Endothelial cell of umbilical vein (primary cell): ENCODE measurements at regions of chr2 and their contacts with region 1.

Region 1: GRCh38 chr2:32356735-32357644 is at the start of gene BIRC6:
- DNase-seq: peak; percentile 97
- H3K4me3 ChIP-seq: peak within 1 kb of the TSS; percentile 68 to 92 (median 84)
- H3K27ac ChIP-seq: peak within 1 kb of the TSS; percentile 77
- H3K4me1 ChIP-seq: peaks cover 13% of the 10 kb centered on the region
- H3K27me3 ChIP-seq: no peaks in the 10 kb centered on the region
- CTCF ChIP-seq: no peak
- POLR2A ChIP-seq: peak; percentile 96
- total RNA-seq, gene BIRC6: 75.7 and 83.1 TPM in 2 replicates

Region 2: GRCh38 chr2:32210767-32211408 is 146.1 kb before region 1 on chr2:
- CTCF ChIA-PET with region 1: no interaction called
- POLR2A ChIA-PET with region 1: no interaction called
- dilution Hi-C with region 1: no loop called
- intact Hi-C with region 1: no loop called
- DNase-seq: no peak
- H3K4me3 ChIP-seq: no peak overlapping the region
- H3K27ac ChIP-seq: no peak overlapping the region
- H3K4me1 ChIP-seq: no peaks in the 10 kb centered on the region
- H3K27me3 ChIP-seq: no peaks in the 10 kb centered on the region
- CTCF ChIP-seq: no peak
- POLR2A ChIP-seq: no peak

Region 3: DNA sequence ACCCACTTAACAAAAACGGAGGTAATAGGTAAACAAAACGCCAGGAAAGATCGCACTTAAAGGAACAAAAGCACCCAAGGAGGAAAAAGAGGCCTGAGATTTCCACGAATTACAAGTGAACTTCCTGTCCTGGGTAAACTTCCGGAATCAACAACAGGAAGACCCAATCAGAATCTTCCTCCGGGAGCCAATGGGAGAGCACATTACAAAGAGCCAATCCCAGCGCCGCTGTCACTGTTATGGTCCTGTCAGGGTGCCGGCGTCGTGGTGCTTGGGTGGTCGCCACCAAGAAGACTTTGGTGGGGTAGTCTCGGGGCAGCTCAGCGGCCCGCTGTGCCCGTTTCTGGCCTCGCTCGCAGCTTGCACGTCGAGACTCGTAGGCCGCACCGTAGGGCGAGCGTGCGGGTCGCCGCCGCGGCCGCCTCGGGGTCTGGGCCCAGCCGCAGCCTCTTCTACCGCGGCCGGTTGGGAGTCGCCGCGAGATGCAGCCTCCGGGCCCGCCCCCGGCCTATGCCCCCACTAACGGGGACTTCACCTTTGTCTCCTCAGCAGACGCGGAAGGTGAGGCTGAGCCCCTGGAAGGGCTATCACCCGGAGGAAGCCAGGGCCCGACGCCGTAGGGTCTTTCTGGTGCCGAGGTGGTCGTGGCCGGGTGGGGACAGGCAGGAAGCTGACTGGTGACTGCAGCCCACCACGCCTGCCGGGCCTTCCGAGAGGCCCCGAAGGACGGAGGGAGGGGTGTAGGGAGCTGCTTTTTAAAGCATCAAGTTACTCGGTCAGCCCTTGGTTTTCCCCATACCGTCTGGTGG is 79.1 kb before region 1 on chr2 and contains the start of gene YIPF4:
- CTCF ChIA-PET with region 1: no interaction called
- POLR2A ChIA-PET with region 1: no interaction called
- dilution Hi-C with region 1: no loop called
- intact Hi-C with region 1: loop called (anchors 1 kb)
- DNase-seq: peak; percentile 97
- H3K4me3 ChIP-seq: peak within 1 kb of the TSS; percentile 86 to 94 (median 88)
- H3K27ac ChIP-seq: peak within 1 kb of the TSS; percentile 80
- H3K4me1 ChIP-seq: peaks cover 11% of the 10 kb centered on the region
- H3K27me3 ChIP-seq: peaks cover 0 to 2% of the 10 kb centered on the region in 2 experiments
- CTCF ChIP-seq: no peak
- POLR2A ChIP-seq: peak; percentile 69
- total RNA-seq, gene YIPF4: 40.1 and 45.0 TPM in 2 replicates

Region 4: DNA sequence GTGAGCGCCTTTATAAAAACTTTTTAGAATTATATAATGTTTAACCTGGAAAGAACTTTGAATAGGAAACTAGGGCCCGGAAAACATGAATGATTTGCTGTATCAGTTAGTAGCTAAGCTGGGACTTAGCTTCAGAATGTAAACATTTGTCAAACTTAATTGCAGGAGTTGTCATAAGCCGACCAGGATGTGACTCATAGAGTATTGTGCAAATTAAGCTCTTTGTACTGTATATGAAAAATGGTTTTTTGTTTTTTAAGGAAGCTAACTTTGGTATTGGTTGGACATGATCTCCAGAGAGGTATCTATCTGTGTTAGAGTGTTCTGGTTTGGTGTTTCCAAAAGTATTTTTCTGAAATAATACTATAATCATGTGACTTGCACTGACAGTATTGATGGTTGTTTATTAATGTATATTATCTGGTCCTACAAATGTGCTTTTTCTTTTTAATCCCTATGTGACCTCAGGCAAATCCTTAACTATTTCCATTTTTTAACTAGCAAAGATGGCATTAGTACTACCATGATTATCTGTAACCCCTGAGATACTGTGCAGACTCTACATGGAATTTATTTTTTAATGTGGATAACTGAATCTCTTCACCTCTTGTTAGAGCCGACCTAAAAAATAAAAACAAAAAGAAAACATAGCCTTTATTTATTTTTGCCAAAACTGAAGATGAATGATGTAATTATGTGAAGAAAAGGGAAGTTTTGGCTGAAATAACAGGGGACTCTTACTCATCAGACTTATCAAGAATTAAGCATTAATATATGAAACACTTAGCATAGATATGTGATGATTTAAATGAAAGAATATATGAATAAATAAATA is 67.6 kb before region 1 on chr2:
- CTCF ChIA-PET with region 1: no interaction called
- POLR2A ChIA-PET with region 1: no interaction called
- dilution Hi-C with region 1: no loop called
- intact Hi-C with region 1: no loop called
- DNase-seq: peak; percentile 86
- H3K4me3 ChIP-seq: no peak overlapping the region
- H3K27ac ChIP-seq: peak overlapping the region; percentile 70
- H3K4me1 ChIP-seq: peaks cover 28% of the 10 kb centered on the region
- H3K27me3 ChIP-seq: no peaks in the 10 kb centered on the region
- CTCF ChIP-seq: no peak
- POLR2A ChIP-seq: no peak

Region 5: DNA sequence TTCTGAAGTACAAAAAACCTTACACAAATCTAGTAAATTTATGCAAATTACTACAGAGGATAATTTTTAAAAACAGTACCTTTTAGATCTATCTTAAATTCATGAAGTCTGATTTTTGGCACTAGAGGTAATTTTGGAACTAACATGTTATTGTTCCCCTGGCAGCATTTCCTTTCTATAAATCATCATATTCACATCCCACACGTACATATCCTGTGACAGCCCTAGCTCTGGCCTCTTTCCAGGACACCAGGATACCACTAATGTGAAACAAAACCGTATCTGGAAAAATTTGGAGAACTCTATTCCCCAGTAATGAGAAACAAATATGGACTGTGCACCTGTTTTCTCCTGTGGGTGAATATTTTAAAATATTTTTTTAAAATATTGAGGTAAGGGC is 14.2 kb before region 1 on chr2:
- CTCF ChIA-PET with region 1: interaction called, 3 read pairs
- POLR2A ChIA-PET with region 1: no interaction called
- dilution Hi-C with region 1: no loop called
- intact Hi-C with region 1: loop called (anchors 1 kb)
- DNase-seq: peak; percentile 91
- H3K4me3 ChIP-seq: peak overlapping the region in 2 of 3 experiments; percentile 16 to 58
- H3K27ac ChIP-seq: peak overlapping the region; percentile 74
- H3K4me1 ChIP-seq: peaks cover 3% of the 10 kb centered on the region
- H3K27me3 ChIP-seq: no peaks in the 10 kb centered on the region
- CTCF ChIP-seq: no peak
- POLR2A ChIP-seq: no peak